B cell (primary cell): ENCODE measurements at regions of chr12 and their contacts with region 1.

Region 1: GRCh38 chr12:46382964-46383653 is 10.5 kb upstream of the SLC38A2 start:
- DNase-seq: peak; percentile 94
- ATAC-seq: peak; percentile 69
- H3K4me3 ChIP-seq: peak overlapping the region; percentile 49 to 94 (median 84)
- H3K4me3 Mint-ChIP-seq: peak overlapping the region; percentile 90
- H3K27ac ChIP-seq: peak overlapping the region; percentile 94 to 97
- H3K27ac Mint-ChIP-seq: peak overlapping the region; percentile 98
- H3K4me1 ChIP-seq: peaks cover 38 to 44% of the 10 kb centered on the region in 2 donors
- H3K4me1 Mint-ChIP-seq: peaks cover 46% of the 10 kb centered on the region
- H3K27me3 ChIP-seq: no peaks in the 10 kb centered on the region
- H3K27me3 Mint-ChIP-seq: no peaks in the 10 kb centered on the region
- CTCF ChIP-seq: no peak

Region 2: GRCh38 chr12:45215419-45216229 is 1167.5 kb before region 1 on chr12 and contains the start of gene ANO6:
- CTCF ChIA-PET with region 1: no interaction called
- POLR2A ChIA-PET with region 1: no interaction called
- intact Hi-C with region 1: loop called (anchors 10 kb)
- DNase-seq: peak; percentile 85
- ATAC-seq: peak; percentile 73
- H3K4me3 ChIP-seq: peak within 1 kb of the TSS; percentile 65 to 96 (median 91)
- H3K4me3 Mint-ChIP-seq: peak within 1 kb of the TSS; percentile 96
- H3K27ac ChIP-seq: peak within 1 kb of the TSS; percentile 37 to 68
- H3K27ac Mint-ChIP-seq: peak within 1 kb of the TSS; percentile 89
- H3K4me1 ChIP-seq: peaks cover 14% of the 10 kb centered on the region in 2 donors
- H3K4me1 Mint-ChIP-seq: peaks cover 51% of the 10 kb centered on the region
- H3K27me3 ChIP-seq: no peaks in the 10 kb centered on the region
- H3K27me3 Mint-ChIP-seq: no peaks in the 10 kb centered on the region
- CTCF ChIP-seq: no peak
- total RNA-seq, gene ANO6: 18.7 and 19.5 TPM in 2 replicates

Region 3: GRCh38 chr12:46217541-46218321 is 165.4 kb before region 1 on chr12:
- CTCF ChIA-PET with region 1: interaction called, 3 read pairs
- POLR2A ChIA-PET with region 1: interaction called, 4 read pairs
- intact Hi-C with region 1: loop called (anchors 5 kb)
- DNase-seq: peak; percentile 87
- ATAC-seq: peak; percentile 70
- H3K4me3 ChIP-seq: peak overlapping the region in 4 of 5 experiments; percentile 16 to 59 (median 32)
- H3K4me3 Mint-ChIP-seq: peak overlapping the region; percentile 69
- H3K27ac ChIP-seq: peak overlapping the region; percentile 83 to 96
- H3K27ac Mint-ChIP-seq: peak overlapping the region; percentile 86
- H3K4me1 ChIP-seq: peaks cover 94 to 97% of the 10 kb centered on the region in 2 donors
- H3K4me1 Mint-ChIP-seq: peaks cover 94% of the 10 kb centered on the region
- H3K27me3 ChIP-seq: no peaks in the 10 kb centered on the region
- H3K27me3 Mint-ChIP-seq: no peaks in the 10 kb centered on the region
- CTCF ChIP-seq: no peak

Region 4: DNA sequence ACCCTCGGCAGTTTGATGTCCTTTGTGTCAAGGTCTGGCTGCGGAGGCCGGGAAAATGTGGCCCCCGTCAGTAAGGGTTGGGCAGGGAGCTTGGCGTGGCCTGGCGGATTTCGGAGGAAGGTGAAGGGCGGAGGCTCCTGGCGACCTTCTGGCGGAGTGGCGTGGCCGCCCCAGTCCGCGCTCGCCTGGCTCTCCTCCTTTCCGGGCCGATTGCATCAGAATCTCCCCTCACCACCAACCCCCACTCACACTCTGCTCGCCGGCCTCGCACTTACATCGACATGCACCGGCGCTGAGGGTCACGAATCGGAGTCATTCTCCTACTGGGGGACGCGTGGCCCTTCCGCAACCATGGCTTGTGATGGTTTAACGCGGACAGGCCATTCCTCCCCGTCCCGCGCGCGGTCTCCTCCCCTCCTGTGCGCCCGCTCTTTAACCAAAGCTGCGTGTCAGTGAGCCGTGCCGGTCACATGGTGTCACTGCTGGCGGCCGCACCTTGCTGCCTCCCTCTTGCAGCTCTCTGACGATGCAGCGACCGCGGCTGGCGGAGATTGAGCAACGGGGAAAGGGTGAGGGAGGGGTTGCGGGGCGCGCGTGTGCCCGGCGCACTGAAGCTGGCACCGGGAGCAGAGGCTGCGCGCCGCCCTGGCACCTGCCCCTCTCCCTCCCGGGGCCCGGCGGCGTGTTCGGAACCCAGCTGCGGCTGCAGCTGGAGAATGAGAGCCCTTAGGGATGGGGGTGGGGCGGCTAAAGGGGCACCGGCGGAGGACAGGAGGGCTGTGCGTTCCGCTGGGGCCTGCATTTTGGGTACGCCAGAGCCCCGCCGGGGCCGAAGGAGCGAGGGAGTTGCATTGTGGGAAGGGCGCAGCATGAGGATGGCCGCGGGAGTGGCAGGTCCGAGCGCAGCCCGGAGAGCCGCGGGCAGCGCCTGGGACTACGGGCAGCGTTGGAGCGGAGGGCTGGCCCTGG is 114.2 kb before region 1 on chr12 and contains the start of gene SLC38A1:
- CTCF ChIA-PET with region 1: no interaction called
- POLR2A ChIA-PET with region 1: interaction called, 7 read pairs
- intact Hi-C with region 1: loop called (anchors 5 kb)
- DNase-seq: peak; percentile 93
- ATAC-seq: peak; percentile 69
- H3K4me3 ChIP-seq: peak within 1 kb of the TSS; percentile 70 to 98 (median 96)
- H3K4me3 Mint-ChIP-seq: no peak within 1 kb of the TSS
- H3K27ac ChIP-seq: peak within 1 kb of the TSS; percentile 91 to 94
- H3K27ac Mint-ChIP-seq: no peak within 1 kb of the TSS
- H3K4me1 ChIP-seq: peaks cover 38 to 41% of the 10 kb centered on the region in 2 donors
- H3K4me1 Mint-ChIP-seq: peaks cover 30% of the 10 kb centered on the region
- H3K27me3 ChIP-seq: no peaks in the 10 kb centered on the region
- H3K27me3 Mint-ChIP-seq: no peaks in the 10 kb centered on the region
- CTCF ChIP-seq: no peak
- total RNA-seq, gene SLC38A1: 205 and 219 TPM in 2 replicates

Region 5: DNA sequence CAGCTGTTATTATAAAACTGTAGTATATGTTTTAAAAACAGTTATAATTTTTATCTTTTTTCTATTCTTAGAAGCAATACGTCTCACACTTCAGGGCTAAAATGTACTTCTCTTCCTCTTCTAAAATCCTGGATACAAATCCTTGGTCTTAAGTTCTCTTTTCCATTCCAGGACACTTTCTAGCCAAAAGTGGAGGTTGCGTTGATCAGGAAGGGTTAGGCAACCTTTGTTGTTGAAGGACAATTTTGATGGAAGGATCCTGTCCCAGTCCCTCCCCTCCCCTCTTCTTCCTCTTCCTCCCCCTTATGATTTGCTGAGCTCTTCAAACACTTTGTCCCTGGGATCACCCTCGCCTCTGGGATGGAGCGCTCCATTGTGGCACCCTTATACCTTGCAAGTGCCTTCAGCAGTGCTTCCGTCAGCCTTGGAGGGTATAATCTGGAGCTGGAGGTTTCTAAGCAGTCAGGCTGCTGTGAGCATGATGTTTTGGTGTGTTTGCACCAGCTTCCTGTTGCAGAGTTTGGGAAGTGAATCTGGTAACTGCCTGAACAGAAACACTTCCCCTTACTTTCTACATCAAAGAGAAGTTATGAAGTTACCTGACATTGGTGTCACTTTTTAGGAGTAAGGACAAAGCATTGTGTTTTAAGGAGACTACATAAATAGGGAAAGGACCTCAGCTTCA is 76.9 kb after region 1 on chr12:
- CTCF ChIA-PET with region 1: no interaction called
- POLR2A ChIA-PET with region 1: no interaction called
- intact Hi-C with region 1: loop called (anchors 5 kb)
- DNase-seq: peak; percentile 67
- ATAC-seq: peak; percentile 69
- H3K4me3 ChIP-seq: peak overlapping the region; percentile 12 to 47 (median 38)
- H3K4me3 Mint-ChIP-seq: peak overlapping the region; percentile 93
- H3K27ac ChIP-seq: peak overlapping the region; percentile 67 to 78
- H3K27ac Mint-ChIP-seq: peak overlapping the region; percentile 99
- H3K4me1 ChIP-seq: peaks cover 53 to 61% of the 10 kb centered on the region in 2 donors
- H3K4me1 Mint-ChIP-seq: peaks cover 59% of the 10 kb centered on the region
- H3K27me3 ChIP-seq: no peaks in the 10 kb centered on the region
- H3K27me3 Mint-ChIP-seq: no peaks in the 10 kb centered on the region
- CTCF ChIP-seq: no peak

Region 6: GRCh38 chr12:46487567-46488131 is 104.5 kb after region 1 on chr12:
- CTCF ChIA-PET with region 1: no interaction called
- POLR2A ChIA-PET with region 1: no interaction called
- intact Hi-C with region 1: loop called (anchors 1 kb)
- DNase-seq: peak; percentile 87
- ATAC-seq: peak; percentile 89
- H3K4me3 ChIP-seq: peak overlapping the region; percentile 7 to 30 (median 27)
- H3K4me3 Mint-ChIP-seq: no peak overlapping the region
- H3K27ac ChIP-seq: peak overlapping the region; percentile 67 to 85
- H3K27ac Mint-ChIP-seq: no peak overlapping the region
- H3K4me1 ChIP-seq: peaks cover 29 to 32% of the 10 kb centered on the region in 2 donors
- H3K4me1 Mint-ChIP-seq: peaks cover 10% of the 10 kb centered on the region
- H3K27me3 ChIP-seq: no peaks in the 10 kb centered on the region
- H3K27me3 Mint-ChIP-seq: no peaks in the 10 kb centered on the region
- CTCF ChIP-seq: peak; percentile 14

Region 7: DNA sequence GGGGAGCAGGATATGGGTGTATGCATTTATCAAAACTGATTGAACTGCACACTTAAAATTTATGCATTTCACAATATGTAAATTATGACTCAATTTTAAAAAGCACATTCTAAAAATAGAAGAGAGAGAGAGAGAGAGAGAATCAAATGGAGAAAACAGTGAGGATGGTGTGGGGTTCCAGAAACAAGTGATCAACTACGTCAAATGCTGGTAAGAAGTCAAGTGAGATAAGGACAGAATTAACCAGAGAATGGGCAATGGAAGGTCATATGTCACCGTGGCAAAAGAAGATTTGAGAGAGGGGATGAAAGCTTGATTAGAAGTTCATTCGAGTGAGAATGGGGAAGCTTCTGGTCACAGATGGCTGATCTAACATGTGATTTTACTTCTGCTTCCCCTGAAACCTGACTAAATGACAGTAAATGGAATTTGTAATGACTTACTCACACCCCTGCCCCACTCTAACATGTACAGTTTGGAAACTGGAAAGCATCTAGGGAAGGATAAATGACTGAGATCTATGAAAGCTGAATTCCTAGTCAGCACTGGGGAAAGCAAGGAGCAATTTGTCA is 973.1 kb after region 1 on chr12:
- CTCF ChIA-PET with region 1: no interaction called
- POLR2A ChIA-PET with region 1: no interaction called
- intact Hi-C with region 1: loop called (anchors 5 kb)
- DNase-seq: peak; percentile 93
- ATAC-seq: peak; percentile 77
- H3K4me3 ChIP-seq: peak overlapping the region in 1 of 5 experiments; percentile 31
- H3K4me3 Mint-ChIP-seq: peak overlapping the region; percentile 74
- H3K27ac ChIP-seq: peak overlapping the region; percentile 91 to 95
- H3K27ac Mint-ChIP-seq: peak overlapping the region; percentile 98
- H3K4me1 ChIP-seq: peaks cover 71 to 80% of the 10 kb centered on the region in 2 donors
- H3K4me1 Mint-ChIP-seq: peaks cover 78% of the 10 kb centered on the region
- H3K27me3 ChIP-seq: no peaks in the 10 kb centered on the region
- H3K27me3 Mint-ChIP-seq: no peaks in the 10 kb centered on the region
- CTCF ChIP-seq: no peak